Naive thymus-derived CD4-positive, alpha-beta T cell (primary cell): ENCODE measurements at regions of chr12 and their contacts with region 1.

Region 1: GRCh38 chr12:120317224-120318105 is 10.1 kb downstream of the PLA2G1B start:
- DNase-seq: peak; percentile 100
- ATAC-seq: peak; percentile 100
- H3K4me3 ChIP-seq: peak overlapping the region; percentile 81
- H3K4me3 Mint-ChIP-seq: peak overlapping the region; percentile 86 to 95 (median 93)
- H3K27ac ChIP-seq: peak overlapping the region; percentile 87
- H3K27ac Mint-ChIP-seq: peak overlapping the region; percentile 85 to 99 (median 98)
- H3K4me1 ChIP-seq: peaks cover 5 to 10% of the 10 kb centered on the region in 2 donors
- H3K4me1 Mint-ChIP-seq: peaks cover 4 to 16% (median 14%) of the 10 kb centered on the region in 7 donors
- H3K27me3 ChIP-seq: no peaks in the 10 kb centered on the region
- H3K27me3 Mint-ChIP-seq: peaks cover 0 to 4% (median 0%) of the 10 kb centered on the region in 5 donors

Region 2: DNA sequence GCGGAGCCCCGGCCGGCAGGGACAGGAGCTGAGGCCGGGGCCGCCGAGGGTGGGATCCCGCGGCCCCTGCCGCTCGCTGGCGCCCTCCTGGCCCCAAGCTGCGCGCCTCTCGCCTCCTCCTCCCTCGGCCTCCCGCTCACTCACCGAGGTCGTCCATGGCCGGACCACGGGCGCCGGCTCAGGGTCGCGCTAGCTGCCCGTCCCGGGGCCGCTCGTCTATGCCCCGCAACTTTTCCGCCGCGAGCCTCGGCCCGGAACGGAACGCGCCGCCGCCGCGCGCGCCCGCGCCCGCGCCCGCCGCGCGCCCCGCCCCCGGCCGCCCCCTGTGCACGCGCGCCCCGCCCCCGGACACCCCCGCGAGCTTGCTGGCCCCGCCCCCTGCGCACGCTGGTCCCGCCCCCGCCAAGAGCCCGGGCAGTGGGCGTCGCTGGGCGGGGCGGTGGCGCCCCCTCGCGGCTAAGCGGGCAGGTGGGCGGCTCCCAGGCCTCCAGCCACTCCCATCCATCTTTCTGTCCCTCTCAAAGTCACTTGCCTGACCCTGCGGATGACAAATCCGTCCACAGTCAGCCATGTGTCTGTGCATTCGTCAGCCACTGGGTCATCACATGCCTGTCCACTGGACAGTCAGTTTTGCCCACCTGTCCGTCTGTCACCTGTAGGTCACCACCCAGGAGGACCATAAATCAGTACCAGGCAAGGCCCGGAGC is 51.8 kb before region 1 on chr12 and contains the start of gene PXN:
- CTCF ChIA-PET with region 1: no interaction called
- POLR2A ChIA-PET with region 1: no interaction called
- intact Hi-C with region 1: no loop called
- DNase-seq: peak; percentile 83 to 98 (median 91)
- ATAC-seq: peak; percentile 99
- H3K4me3 ChIP-seq: peak within 1 kb of the TSS; percentile 76
- H3K4me3 Mint-ChIP-seq: peak within 1 kb of the TSS; percentile 89 to 100 (median 93)
- H3K27ac ChIP-seq: peak within 1 kb of the TSS; percentile 91
- H3K27ac Mint-ChIP-seq: peak within 1 kb of the TSS; percentile 86 to 97 (median 93)
- H3K4me1 ChIP-seq: peaks cover 29 to 40% of the 10 kb centered on the region in 2 donors
- H3K4me1 Mint-ChIP-seq: peaks cover 17 to 46% (median 33%) of the 10 kb centered on the region in 7 donors
- H3K27me3 ChIP-seq: no peaks in the 10 kb centered on the region
- H3K27me3 Mint-ChIP-seq: no peaks in the 10 kb centered on the region
- total RNA-seq, gene PXN: 103 to 202 (median 158) TPM

Region 3: GRCh38 chr12:120301962-120302815 is 15.3 kb before region 1 on chr12 and contains the start of gene SIRT4:
- CTCF ChIA-PET with region 1: interaction called, 5 read pairs
- POLR2A ChIA-PET with region 1: interaction called, 57 read pairs
- intact Hi-C with region 1: loop called (anchors 1 kb)
- DNase-seq: peak; percentile 65 to 90 (median 87)
- ATAC-seq: peak; percentile 100
- H3K4me3 ChIP-seq: peak within 1 kb of the TSS; percentile 98
- H3K4me3 Mint-ChIP-seq: peak within 1 kb of the TSS; percentile 87 to 100 (median 96)
- H3K27ac ChIP-seq: peak within 1 kb of the TSS; percentile 72
- H3K27ac Mint-ChIP-seq: peak within 1 kb of the TSS; percentile 69 to 96 (median 87)
- H3K4me1 ChIP-seq: peaks cover 0 to 4% of the 10 kb centered on the region in 2 donors
- H3K4me1 Mint-ChIP-seq: peaks cover 0 to 16% (median 10%) of the 10 kb centered on the region in 7 donors
- H3K27me3 ChIP-seq: no peaks in the 10 kb centered on the region
- H3K27me3 Mint-ChIP-seq: no peaks in the 10 kb centered on the region
- total RNA-seq, gene SIRT4: 1.6 to 6.0 (median 4.0) TPM

Region 4: DNA sequence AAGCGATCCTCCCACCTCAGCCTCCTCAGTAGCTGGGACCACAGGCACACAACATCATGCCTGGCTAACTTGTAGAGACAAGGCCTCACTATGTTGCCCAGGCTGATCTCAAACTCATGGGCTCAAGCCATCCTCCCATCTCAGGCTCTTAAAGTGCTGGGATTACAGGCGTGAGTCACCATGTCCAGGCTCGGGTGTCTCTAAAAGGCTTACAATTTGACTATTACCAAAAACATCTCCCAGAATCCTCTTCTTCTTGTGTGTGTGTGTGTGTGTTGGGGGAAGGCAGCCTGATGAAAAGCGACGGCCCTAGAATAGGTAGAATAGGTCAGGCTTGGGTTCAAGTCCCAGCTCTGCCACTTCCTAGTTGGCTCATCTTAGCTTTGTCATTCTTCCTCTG is 34.7 kb after region 1 on chr12:
- CTCF ChIA-PET with region 1: no interaction called
- POLR2A ChIA-PET with region 1: no interaction called
- intact Hi-C with region 1: no loop called
- DNase-seq: no peak
- ATAC-seq: no peak
- H3K4me3 ChIP-seq: no peak overlapping the region
- H3K4me3 Mint-ChIP-seq: no peak overlapping the region
- H3K27ac ChIP-seq: no peak overlapping the region
- H3K27ac Mint-ChIP-seq: no peak overlapping the region
- H3K4me1 ChIP-seq: no peaks in the 10 kb centered on the region
- H3K4me1 Mint-ChIP-seq: peaks cover 0 to 3% (median 0%) of the 10 kb centered on the region in 7 donors
- H3K27me3 ChIP-seq: no peaks in the 10 kb centered on the region
- H3K27me3 Mint-ChIP-seq: peaks cover 0 to 2% (median 0%) of the 10 kb centered on the region in 5 donors

Region 5: GRCh38 chr12:120495723-120496412 is 178.4 kb after region 1 on chr12 and contains the start of gene DYNLL1:
- CTCF ChIA-PET with region 1: no interaction called
- POLR2A ChIA-PET with region 1: no interaction called
- intact Hi-C with region 1: loop called in 1 of 2 experiments (anchors 2 kb)
- DNase-seq: peak; percentile 95 to 99 (median 97)
- ATAC-seq: peak; percentile 99
- H3K4me3 ChIP-seq: peak within 1 kb of the TSS; percentile 82
- H3K4me3 Mint-ChIP-seq: peak within 1 kb of the TSS; percentile 83 to 98 (median 94)
- H3K27ac ChIP-seq: peak within 1 kb of the TSS; percentile 84
- H3K27ac Mint-ChIP-seq: peak within 1 kb of the TSS; percentile 58 to 94 (median 90)
- H3K4me1 ChIP-seq: peaks cover 9% of the 10 kb centered on the region in 2 donors
- H3K4me1 Mint-ChIP-seq: peaks cover 13 to 48% (median 33%) of the 10 kb centered on the region in 7 donors
- H3K27me3 ChIP-seq: no peaks in the 10 kb centered on the region
- H3K27me3 Mint-ChIP-seq: no peaks in the 10 kb centered on the region
- total RNA-seq, gene DYNLL1: 35.0 to 301 (median 72.7) TPM

Region 6: DNA sequence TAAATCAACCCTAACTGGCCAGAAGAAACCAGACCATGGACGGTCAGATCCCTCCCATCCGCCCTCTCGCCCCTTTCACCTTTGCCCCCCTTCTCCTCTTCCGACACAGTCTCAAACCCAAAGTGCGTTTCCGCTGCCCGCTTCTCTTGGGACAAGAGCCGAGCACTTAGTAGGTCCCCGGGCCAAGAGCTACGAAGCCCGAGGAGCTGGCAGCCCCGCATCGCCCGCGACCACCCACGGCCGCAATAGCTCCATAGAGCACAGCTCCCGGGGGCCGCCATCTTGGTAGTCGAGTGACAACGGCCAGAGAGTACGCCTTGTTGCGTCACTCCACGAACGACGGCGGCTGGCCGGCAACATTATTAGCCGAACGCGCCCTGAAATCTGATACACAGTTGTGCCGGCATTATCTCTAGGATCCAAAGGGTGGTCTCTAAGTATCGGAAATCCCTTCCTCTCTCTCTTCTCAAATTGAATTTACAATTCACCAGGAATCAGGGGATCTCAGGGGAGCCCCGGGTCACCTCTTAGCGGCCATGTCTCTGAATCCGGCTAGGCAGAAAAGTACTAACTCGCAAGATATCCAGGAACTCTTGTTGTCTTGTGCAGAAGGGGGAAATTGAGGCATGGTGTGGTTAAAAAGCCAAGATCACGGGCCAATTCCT is 211.5 kb after region 1 on chr12 and contains the start of gene COQ5:
- CTCF ChIA-PET with region 1: no interaction called
- POLR2A ChIA-PET with region 1: no interaction called
- intact Hi-C with region 1: loop called (anchors 1 to 5 kb)
- DNase-seq: peak; percentile 64 to 83 (median 80)
- ATAC-seq: peak; percentile 97
- H3K4me3 ChIP-seq: peak within 1 kb of the TSS; percentile 75
- H3K4me3 Mint-ChIP-seq: peak within 1 kb of the TSS; percentile 93 to 100 (median 99)
- H3K27ac ChIP-seq: peak within 1 kb of the TSS; percentile 88
- H3K27ac Mint-ChIP-seq: peak within 1 kb of the TSS; percentile 96 to 100 (median 98)
- H3K4me1 ChIP-seq: no peaks in the 10 kb centered on the region
- H3K4me1 Mint-ChIP-seq: peaks cover 10 to 30% (median 23%) of the 10 kb centered on the region in 7 donors
- H3K27me3 ChIP-seq: no peaks in the 10 kb centered on the region
- H3K27me3 Mint-ChIP-seq: no peaks in the 10 kb centered on the region
- total RNA-seq, gene COQ5: 11.3 to 26.1 (median 23.5) TPM

Region 7: GRCh38 chr12:121015825-121016766 is 698.6 kb after region 1 on chr12 and contains the start of gene C12orf43:
- CTCF ChIA-PET with region 1: no interaction called
- POLR2A ChIA-PET with region 1: no interaction called
- intact Hi-C with region 1: loop called in 1 of 2 experiments (anchors 1 kb)
- DNase-seq: peak; percentile 74 to 93 (median 89)
- ATAC-seq: peak; percentile 99
- H3K4me3 ChIP-seq: peak within 1 kb of the TSS; percentile 88
- H3K4me3 Mint-ChIP-seq: peak within 1 kb of the TSS; percentile 93 to 99 (median 96)
- H3K27ac ChIP-seq: peak within 1 kb of the TSS; percentile 88
- H3K27ac Mint-ChIP-seq: peak within 1 kb of the TSS; percentile 89 to 97 (median 95)
- H3K4me1 ChIP-seq: peaks cover 6 to 11% of the 10 kb centered on the region in 2 donors
- H3K4me1 Mint-ChIP-seq: peaks cover 17 to 32% (median 24%) of the 10 kb centered on the region in 7 donors
- H3K27me3 ChIP-seq: no peaks in the 10 kb centered on the region
- H3K27me3 Mint-ChIP-seq: no peaks in the 10 kb centered on the region
- total RNA-seq, gene C12orf43: 11.8 to 24.2 (median 17.5) TPM